ENCODE measurements at regions of chr3 and their contacts with region 1.

Region 1: GRCh38 chr3:125202197-125202596 is 10.4 kb downstream of the SLC12A8 start:
- DNase-seq: no peak
- H3K4me3 ChIP-seq: no peak overlapping the region
- H3K27ac ChIP-seq: no peak overlapping the region
- H3K4me1 ChIP-seq: no peaks in the 10 kb centered on the region
- H3K27me3 ChIP-seq: no peaks in the 10 kb centered on the region
- CTCF ChIP-seq: no peak

Region 2: DNA sequence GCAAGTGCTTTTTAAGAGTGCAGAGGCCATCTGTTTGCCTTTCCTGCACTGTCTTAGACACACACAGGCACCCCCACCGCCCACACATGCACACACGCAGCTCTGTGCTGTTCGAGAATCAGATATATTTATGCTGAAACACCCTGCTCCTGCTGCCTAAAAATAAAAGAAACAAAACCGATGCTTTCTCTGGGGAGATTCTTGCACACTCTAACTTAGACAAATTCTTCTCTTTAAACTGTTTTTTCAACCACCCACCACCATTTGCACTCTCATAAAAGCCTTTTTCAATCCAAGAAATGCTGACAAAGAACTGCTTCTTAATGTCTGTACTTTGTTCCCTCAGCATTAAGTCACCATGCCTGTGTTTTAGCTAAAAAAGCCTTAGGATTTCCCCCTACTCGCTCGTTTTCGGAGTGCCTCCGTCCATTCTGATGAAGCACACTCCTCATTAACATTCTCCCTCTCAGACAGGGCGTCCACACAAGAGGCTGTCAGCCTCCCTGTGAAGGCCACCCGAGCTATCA is 15.9 kb before region 1 on chr3:
- CTCF ChIA-PET with region 1: no interaction called
- POLR2A ChIA-PET with region 1: no interaction called
- intact Hi-C with region 1: no loop called
- DNase-seq: no peak
- H3K4me3 ChIP-seq: no peak overlapping the region
- H3K27ac ChIP-seq: no peak overlapping the region
- H3K4me1 ChIP-seq: no peaks in the 10 kb centered on the region
- H3K27me3 ChIP-seq: no peaks in the 10 kb centered on the region
- CTCF ChIP-seq: no peak

Region 3: GRCh38 chr3:125257536-125257935 is 55.3 kb after region 1 on chr3:
- CTCF ChIA-PET with region 1: interaction called, 10 read pairs
- POLR2A ChIA-PET with region 1: no interaction called
- intact Hi-C with region 1: no loop called
- DNase-seq: no peak
- H3K4me3 ChIP-seq: no peak overlapping the region
- H3K27ac ChIP-seq: no peak overlapping the region
- H3K4me1 ChIP-seq: no peaks in the 10 kb centered on the region
- H3K27me3 ChIP-seq: no peaks in the 10 kb centered on the region
- CTCF ChIP-seq: no peak

Measured in PC-9 (cell line).